BJ (cell line): ENCODE measurements at regions of chr21 and their contacts with region 1.

Region 1: DNA sequence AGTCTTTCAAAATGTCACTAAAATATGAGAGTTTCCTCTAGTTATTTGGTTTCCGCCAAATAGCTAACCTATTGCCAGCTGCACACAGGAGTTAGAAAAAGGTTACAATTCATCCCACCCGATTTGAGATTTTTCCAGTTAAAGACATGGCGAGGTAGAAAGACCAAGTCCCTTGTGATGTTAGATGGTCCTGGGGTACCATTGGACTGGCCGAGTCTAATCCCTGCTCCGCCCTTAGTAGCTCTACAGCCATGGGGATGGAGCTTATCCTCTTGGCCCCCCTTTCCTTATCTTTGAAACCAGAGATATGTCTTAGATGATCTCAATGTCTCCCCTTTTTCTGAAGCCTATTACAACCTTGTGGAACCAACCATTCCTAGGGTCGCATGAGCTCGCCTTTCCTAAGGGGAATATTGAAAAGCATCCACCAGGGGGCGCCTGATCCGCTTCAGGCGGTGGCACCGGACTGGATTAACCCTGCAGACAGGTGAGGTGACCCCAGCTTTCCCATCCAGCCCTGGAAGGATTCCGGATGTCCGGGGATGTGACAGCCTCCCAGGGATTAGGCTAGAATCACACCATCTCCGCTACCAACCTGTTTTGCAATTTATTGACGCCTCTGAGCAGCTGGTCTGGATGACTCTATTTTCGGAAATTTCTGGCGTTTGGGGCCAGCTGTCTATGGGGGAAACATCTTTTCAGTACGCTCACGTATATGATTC is 68.3 kb upstream of the SIM2 start:
- DNase-seq: no peak
- H3K4me3 ChIP-seq: no peak overlapping the region
- H3K27me3 ChIP-seq: peaks cover 26% of the 10 kb centered on the region
- CTCF ChIP-seq: peak; percentile 75

Region 2: DNA sequence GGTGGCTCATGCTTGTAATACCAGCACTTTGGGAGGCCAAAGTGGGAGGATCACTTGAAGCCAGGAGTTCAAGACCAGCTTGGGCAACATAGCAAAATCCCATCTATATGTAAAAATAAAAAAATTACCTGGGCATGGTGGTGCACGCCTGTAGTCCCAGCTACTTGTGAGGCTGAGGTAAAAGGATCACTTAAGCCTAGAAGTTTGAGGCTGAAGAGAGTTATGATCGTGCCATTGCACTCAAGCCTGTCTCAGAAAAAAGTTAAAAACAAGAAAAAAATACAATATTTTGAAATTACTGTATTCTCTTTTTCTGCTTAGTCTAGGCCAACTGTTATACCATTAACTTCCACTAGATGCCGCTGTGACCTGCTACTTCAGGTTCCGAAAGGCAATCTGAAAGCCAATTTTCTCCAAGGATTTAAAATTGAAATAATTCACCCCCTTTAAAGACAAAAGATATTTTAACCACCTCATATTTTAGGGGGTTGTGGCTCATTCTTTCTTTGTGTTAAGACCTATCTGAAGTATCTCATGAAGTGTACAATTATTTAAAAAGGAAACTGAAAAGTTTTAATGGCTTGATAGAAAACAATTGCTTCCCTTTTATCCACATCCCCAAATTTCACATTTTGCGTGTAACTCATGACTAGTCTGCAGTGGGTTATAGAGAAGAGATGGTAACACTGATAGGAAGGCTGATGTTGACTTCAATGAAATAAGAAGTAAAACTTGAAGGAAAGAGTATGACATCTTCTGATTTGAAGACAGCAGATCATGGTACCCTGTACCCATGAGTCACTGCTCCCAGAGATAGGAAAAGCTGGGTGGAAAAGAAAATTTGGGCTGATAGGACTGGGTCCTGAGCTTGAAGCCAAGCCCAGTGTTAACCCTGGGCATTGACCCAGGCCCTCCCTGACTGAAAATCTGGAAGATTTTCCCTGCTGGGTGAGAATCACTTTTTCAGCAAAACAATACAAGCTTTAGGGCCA is 126.3 kb before region 1 on chr21:
- CTCF ChIA-PET with region 1: interaction called, 24 read pairs
- POLR2A ChIA-PET with region 1: no interaction called
- DNase-seq: no peak
- H3K4me3 ChIP-seq: no peak overlapping the region
- H3K27me3 ChIP-seq: peaks cover 10% of the 10 kb centered on the region
- CTCF ChIP-seq: peak; percentile 78

Region 3: DNA sequence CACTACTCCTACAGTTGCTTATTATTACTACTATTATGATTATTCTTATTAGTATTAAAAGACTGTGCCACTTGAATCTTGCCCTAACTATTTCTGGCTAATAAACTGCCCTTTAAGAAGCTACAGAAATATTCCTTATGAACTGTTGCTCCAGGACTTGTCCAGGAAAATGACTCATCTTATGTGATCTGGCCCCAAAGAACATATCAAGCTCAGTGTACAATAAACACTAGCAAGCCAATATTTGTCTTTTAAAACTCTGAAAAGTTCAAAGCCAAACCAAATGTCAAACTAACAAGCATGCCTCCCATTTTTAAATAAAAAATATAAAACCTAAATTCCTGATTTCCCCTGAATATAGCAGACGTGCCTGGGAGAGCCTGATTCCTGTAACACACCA is 20.4 kb before region 1 on chr21:
- CTCF ChIA-PET with region 1: interaction called, 15 read pairs
- POLR2A ChIA-PET with region 1: no interaction called
- DNase-seq: no peak
- H3K4me3 ChIP-seq: no peak overlapping the region
- H3K27me3 ChIP-seq: peaks cover 24% of the 10 kb centered on the region
- CTCF ChIP-seq: no peak

Region 4: GRCh38 chr21:36640721-36641244 is 10.1 kb after region 1 on chr21:
- CTCF ChIA-PET with region 1: interaction called, 22 read pairs
- POLR2A ChIA-PET with region 1: no interaction called
- DNase-seq: no peak
- H3K4me3 ChIP-seq: no peak overlapping the region
- H3K27me3 ChIP-seq: peaks cover 5% of the 10 kb centered on the region
- CTCF ChIP-seq: no peak

Region 5: GRCh38 chr21:36658926-36659325 is 28.3 kb after region 1 on chr21:
- CTCF ChIA-PET with region 1: interaction called, 12 read pairs
- POLR2A ChIA-PET with region 1: no interaction called
- DNase-seq: no peak
- H3K4me3 ChIP-seq: no peak overlapping the region
- H3K27me3 ChIP-seq: peaks cover 14% of the 10 kb centered on the region
- CTCF ChIP-seq: no peak

Region 6: DNA sequence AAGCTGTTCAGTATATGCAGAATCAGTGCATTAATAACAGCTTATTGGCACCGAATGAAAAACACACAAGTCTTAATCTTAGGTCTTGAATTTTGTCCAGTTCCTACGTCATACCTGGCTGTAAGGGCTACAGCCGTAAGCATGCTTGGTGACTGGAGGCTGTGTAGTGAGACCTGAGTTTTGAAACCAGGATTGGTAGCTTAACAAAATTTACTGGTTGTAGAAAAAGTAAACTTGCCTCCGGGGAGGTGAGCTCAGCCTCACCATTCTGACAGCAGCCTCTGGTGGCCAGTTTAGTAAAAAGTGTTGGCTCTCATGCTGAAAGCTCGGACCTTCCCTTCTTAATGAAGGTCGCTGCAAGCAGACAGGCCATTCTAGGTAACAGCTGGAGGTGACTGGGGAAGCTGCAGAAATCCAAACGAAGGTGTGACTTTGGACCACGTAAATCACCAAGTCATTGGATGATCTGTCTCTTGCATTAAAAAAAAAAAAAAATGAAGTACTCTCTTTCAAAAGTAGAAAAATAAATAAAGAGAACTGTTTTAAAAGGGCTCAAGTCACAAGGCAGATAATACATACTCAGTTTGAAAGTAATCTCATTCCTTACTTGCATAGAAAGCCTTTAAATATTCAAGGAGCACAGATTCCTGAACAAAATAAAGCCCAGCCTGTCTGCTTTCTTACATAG is 287.0 kb after region 1 on chr21:
- CTCF ChIA-PET with region 1: interaction called, 70 read pairs
- POLR2A ChIA-PET with region 1: no interaction called
- DNase-seq: no peak
- H3K4me3 ChIP-seq: no peak overlapping the region
- H3K27me3 ChIP-seq: no peaks in the 10 kb centered on the region
- CTCF ChIP-seq: peak; percentile 69

Region 7: GRCh38 chr21:36927719-36928117 is 297.1 kb after region 1 on chr21:
- CTCF ChIA-PET with region 1: interaction called, 70 read pairs
- POLR2A ChIA-PET with region 1: no interaction called
- DNase-seq: peak; percentile 67
- H3K4me3 ChIP-seq: no peak overlapping the region
- H3K27me3 ChIP-seq: no peaks in the 10 kb centered on the region
- CTCF ChIP-seq: peak; percentile 90